Activated CD4-positive, alpha-beta memory T cell treated with anti-CD3 and anti-CD28 coated beads, Interleukin-2, amount 10 ng/mL, durations not matched to agents 7 days and 5 days (primary cell): ENCODE measurements at regions of chr3 and their contacts with region 1.

Region 1: DNA sequence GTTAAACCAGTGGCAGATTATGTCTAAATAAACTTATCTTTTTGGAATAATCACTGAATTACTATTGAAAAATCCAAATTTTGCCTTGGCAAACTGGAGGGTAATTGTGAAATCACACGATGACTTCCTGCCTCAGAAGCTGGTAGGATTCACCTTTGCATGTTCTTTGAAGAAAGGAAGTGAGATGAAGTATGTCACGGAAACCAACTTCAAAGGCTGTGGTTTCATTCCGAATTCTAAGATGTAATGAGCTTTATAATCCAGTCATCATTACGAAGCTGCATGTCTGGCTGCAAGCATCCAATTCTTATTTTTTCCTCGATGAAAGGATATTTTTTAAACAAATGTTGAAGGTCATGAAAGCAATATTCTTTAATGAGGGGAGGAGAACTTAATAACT is 15.0 kb upstream of the ZBED2 start:
- DNase-seq: peak; percentile 45
- H3K4me3 Mint-ChIP-seq: peak overlapping the region; percentile 45
- H3K27ac Mint-ChIP-seq: peak overlapping the region; percentile 95
- H3K4me1 Mint-ChIP-seq: peaks cover 95% of the 10 kb centered on the region
- H3K27me3 Mint-ChIP-seq: no peaks in the 10 kb centered on the region

Region 2: GRCh38 chr3:111539351-111540331 is 70.5 kb before region 1 on chr3:
- CTCF ChIA-PET with region 1: interaction called, 6 read pairs
- POLR2A ChIA-PET with region 1: interaction called, 75 read pairs
- DNase-seq: peak; percentile 74
- H3K4me3 Mint-ChIP-seq: peak overlapping the region; percentile 70
- H3K27ac Mint-ChIP-seq: peak overlapping the region; percentile 82
- H3K4me1 Mint-ChIP-seq: peaks cover 53% of the 10 kb centered on the region
- H3K27me3 Mint-ChIP-seq: no peaks in the 10 kb centered on the region

Region 3: GRCh38 chr3:111594205-111594604 is 16.0 kb before region 1 on chr3:
- CTCF ChIA-PET with region 1: interaction called, 26 read pairs
- POLR2A ChIA-PET with region 1: interaction called, 45 read pairs
- DNase-seq: no peak
- H3K4me3 Mint-ChIP-seq: peak overlapping the region; percentile 71
- H3K27ac Mint-ChIP-seq: peak overlapping the region; percentile 85
- H3K4me1 Mint-ChIP-seq: peaks cover 86% of the 10 kb centered on the region
- H3K27me3 Mint-ChIP-seq: no peaks in the 10 kb centered on the region

Region 4: DNA sequence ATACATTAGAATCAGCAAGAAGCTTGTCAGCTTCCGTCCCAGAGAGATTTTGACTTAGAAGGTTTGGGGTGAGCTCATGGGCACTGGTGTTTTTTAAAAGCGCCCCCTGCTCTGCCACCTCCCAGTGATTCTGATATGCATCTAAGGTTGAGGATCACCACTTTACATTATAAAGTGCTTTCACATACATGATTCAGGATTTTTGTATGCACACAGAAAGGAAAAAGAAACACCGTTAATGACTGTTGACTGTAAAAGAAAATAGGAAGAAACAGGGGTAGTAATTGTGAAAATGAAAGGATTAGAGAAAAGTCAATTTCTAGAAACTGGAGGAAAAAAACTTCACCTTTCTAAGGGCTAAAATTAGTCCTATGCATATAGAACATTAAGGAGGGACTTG is 89.9 kb after region 1 on chr3:
- CTCF ChIA-PET with region 1: no interaction called
- POLR2A ChIA-PET with region 1: no interaction called
- DNase-seq: no peak
- H3K4me3 Mint-ChIP-seq: peak overlapping the region; percentile 35
- H3K27ac Mint-ChIP-seq: peak overlapping the region; percentile 64
- H3K4me1 Mint-ChIP-seq: peaks cover 23% of the 10 kb centered on the region
- H3K27me3 Mint-ChIP-seq: no peaks in the 10 kb centered on the region

Region 5: DNA sequence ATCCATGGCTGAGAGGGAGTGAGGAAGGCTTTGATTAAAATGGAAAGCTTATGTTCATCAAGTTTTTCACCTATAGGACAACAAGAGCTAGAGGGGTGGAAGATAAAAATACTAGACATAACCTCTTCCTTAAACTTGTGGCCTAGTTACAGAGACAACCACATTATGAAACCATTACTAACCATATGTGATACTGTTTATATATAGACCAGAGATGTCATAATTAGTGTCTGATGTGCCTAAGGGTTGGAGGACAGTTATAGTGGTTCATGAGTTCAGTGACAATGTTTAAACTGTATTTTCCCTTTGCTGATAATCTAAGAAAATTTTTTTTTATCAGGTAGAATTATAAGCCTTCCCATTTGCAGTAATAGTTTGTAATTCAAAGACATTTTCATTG is 272.6 kb after region 1 on chr3:
- CTCF ChIA-PET with region 1: no interaction called
- POLR2A ChIA-PET with region 1: no interaction called
- DNase-seq: no peak
- H3K4me3 Mint-ChIP-seq: no peak overlapping the region
- H3K27ac Mint-ChIP-seq: no peak overlapping the region
- H3K4me1 Mint-ChIP-seq: peaks cover 4% of the 10 kb centered on the region
- H3K27me3 Mint-ChIP-seq: no peaks in the 10 kb centered on the region